Ascending aorta (tissue), 2 donors: ENCODE measurements at regions of chr5 and their contacts with region 1.

Region 1: GRCh38 chr5:96336351-96336985 is 96.6 kb downstream of the PCSK1 start:
- DNase-seq: peak in 1 of 2 donors; percentile 91
- H3K4me3 ChIP-seq: no peak overlapping the region
- H3K27ac ChIP-seq: peak overlapping the region; percentile 80 to 81
- H3K4me1 ChIP-seq: peaks cover 11 to 67% of the 10 kb centered on the region in 2 donors
- H3K27me3 ChIP-seq: no peaks in the 10 kb centered on the region
- CTCF ChIP-seq: peak; percentile 84 to 86 (median 84)

Region 2: GRCh38 chr5:95870105-95870672 is 466.3 kb before region 1 on chr5:
- intact Hi-C with region 1: no loop called
- DNase-seq: no peak
- H3K4me3 ChIP-seq: no peak overlapping the region
- H3K27ac ChIP-seq: peak overlapping the region; percentile 63 to 81
- H3K4me1 ChIP-seq: peaks cover 5 to 20% of the 10 kb centered on the region in 2 donors
- H3K27me3 ChIP-seq: no peaks in the 10 kb centered on the region
- CTCF ChIP-seq: no peak

Region 3: GRCh38 chr5:96023518-96023917 is 312.9 kb before region 1 on chr5:
- intact Hi-C with region 1: loop called (anchors 5 kb)
- DNase-seq: no peak
- H3K4me3 ChIP-seq: peak overlapping the region in 1 of 2 donors; percentile 20
- H3K27ac ChIP-seq: peak overlapping the region in 1 of 2 donors; percentile 54
- H3K4me1 ChIP-seq: peaks cover 0 to 12% of the 10 kb centered on the region in 2 donors
- H3K27me3 ChIP-seq: no peaks in the 10 kb centered on the region
- CTCF ChIP-seq: no peak

Region 4: GRCh38 chr5:96125231-96125891 is 211.1 kb before region 1 on chr5:
- intact Hi-C with region 1: loop called (anchors 5 kb)
- DNase-seq: no peak
- H3K4me3 ChIP-seq: peak overlapping the region in 1 of 2 donors; percentile 38
- H3K27ac ChIP-seq: peak overlapping the region; percentile 25 to 32
- H3K4me1 ChIP-seq: peaks cover 4 to 13% of the 10 kb centered on the region in 2 donors
- H3K27me3 ChIP-seq: no peaks in the 10 kb centered on the region
- CTCF ChIP-seq: no peak

Region 5: GRCh38 chr5:96226941-96227552 is 109.4 kb before region 1 on chr5:
- intact Hi-C with region 1: loop called (anchors 10 kb)
- DNase-seq: peak in 1 of 2 donors; percentile 71
- H3K4me3 ChIP-seq: peak overlapping the region in 1 of 2 donors; percentile 26
- H3K27ac ChIP-seq: peak overlapping the region; percentile 67 to 79
- H3K4me1 ChIP-seq: peaks cover 0 to 11% of the 10 kb centered on the region in 2 donors
- H3K27me3 ChIP-seq: no peaks in the 10 kb centered on the region
- CTCF ChIP-seq: no peak

Region 6: DNA sequence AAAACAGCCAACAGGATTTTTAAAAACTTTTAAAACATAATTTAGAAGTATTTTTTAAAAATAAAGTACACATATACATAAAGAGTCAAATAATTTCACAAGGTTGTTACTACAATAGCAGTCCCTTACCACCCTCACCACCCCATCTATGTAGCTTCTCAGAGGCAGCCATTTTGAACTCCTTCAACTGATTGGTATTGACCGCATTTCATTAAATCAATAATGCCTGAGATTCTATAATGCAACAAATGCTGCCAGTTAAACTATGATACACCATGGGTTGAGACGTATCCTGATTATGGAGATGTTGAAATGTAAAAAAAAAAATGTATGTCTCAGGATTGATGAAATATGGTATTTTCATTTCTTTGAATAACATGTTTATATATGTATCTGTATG is 17.8 kb after region 1 on chr5:
- intact Hi-C with region 1: no loop called
- DNase-seq: no peak
- H3K4me3 ChIP-seq: no peak overlapping the region
- H3K27ac ChIP-seq: no peak overlapping the region
- H3K4me1 ChIP-seq: no peaks in the 10 kb centered on the region
- H3K27me3 ChIP-seq: no peaks in the 10 kb centered on the region
- CTCF ChIP-seq: no peak